ENCODE measurements at regions of chr12 and their contacts with region 1.

Region 1: DNA sequence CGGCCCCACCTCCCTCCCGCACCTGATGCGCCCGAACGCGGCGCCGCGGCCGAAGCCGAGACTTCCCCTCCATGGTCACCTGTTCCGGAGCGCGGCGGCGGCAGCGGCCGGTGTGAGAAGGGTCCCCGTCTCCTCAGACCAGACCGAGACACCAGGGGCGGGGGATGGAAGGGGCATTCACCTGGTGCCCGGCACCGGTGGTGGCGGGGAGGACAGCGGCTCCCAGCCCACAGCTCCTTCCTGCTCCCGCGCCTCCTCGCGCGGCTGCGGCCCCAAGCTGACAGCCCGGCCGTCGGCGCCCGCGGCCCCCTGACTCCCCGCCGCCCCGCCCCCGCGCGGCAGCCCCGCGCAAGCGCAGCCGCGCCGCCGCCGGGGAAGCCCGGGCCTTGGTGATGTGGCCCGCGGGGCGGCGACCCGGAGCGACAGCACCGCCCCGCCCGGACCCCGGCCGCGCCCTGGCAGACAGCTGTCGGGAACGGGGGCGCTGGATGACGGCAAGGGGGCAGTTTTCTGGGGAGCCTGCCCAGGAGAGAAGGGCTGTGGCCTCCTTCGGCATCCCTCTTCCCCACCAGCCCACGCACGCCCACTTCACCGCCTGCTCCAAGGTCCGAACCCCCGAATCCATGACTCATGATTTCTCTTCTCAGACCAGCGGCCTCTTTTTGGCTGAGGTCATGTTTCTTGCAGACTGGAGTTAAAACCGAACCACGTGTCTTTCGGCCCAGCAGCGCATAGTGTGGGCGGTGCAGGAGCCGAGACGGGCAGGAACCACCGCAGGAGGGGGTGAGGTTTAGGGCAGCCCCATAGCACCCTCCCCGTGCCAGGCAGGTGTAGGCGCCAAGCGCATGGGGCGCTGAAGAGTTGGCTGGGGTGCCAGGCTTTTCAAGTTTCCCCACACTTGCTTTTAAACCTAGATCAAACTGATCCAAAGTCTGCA is at the start of gene SLC41A2:
- DNase-seq: peak; percentile 55 to 87 (median 74)
- ATAC-seq: peak; percentile 93
- H3K4me3 ChIP-seq: peak within 1 kb of the TSS; percentile 77
- H3K4me3 Mint-ChIP-seq: peak within 1 kb of the TSS; percentile 91 to 98 (median 96)
- H3K27ac ChIP-seq: peak within 1 kb of the TSS; percentile 59
- H3K27ac Mint-ChIP-seq: peak within 1 kb of the TSS; percentile 65 to 93 (median 89)
- H3K4me1 ChIP-seq: peaks cover 6 to 9% of the 10 kb centered on the region in 2 donors
- H3K4me1 Mint-ChIP-seq: peaks cover 8 to 29% (median 26%) of the 10 kb centered on the region in 7 donors
- H3K27me3 ChIP-seq: peaks cover 0 to 3% of the 10 kb centered on the region in 2 donors
- H3K27me3 Mint-ChIP-seq: peaks cover 5 to 49% (median 7%) of the 10 kb centered on the region in 5 donors
- total RNA-seq, gene SLC41A2: 2.0 to 12.7 (median 2.6) TPM

Region 2: DNA sequence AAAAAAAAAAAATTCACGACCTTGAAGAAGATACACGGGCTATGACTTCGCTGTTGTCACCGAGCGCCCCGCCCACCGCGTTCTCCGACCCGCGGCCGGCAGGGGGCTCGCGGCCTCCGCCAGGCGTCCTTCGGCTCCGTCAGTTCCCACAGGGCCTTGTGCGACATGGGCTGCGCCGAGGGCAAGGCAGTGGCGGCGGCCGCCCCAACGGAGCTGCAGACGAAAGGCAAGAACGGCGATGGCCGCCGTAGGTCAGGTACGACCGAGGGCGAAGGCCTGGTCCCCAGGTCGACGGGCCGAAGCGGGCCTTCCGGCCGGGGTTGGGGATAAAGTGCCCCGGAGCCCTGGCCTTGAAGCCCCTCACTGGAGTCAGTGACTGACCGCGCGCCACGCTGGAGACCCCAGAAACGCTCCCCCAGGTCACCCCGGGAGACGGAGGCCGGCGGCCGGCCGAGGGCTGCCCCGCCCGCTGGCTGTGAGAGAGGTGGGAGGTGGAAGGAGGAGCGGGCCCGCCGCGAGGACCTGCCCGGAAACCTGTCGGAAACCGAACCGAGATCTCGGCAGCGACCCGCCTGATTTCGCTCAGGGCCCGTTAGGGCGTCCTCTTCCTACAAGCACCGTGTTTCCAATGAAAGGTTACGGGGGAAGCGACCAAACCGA is 742.5 kb before region 1 on chr12 and contains the start of gene TXNRD1:
- CTCF ChIA-PET with region 1: interaction called, 3 read pairs
- POLR2A ChIA-PET with region 1: no interaction called
- intact Hi-C with region 1: loop called (anchors 5 kb)
- DNase-seq: peak; percentile 70 to 84 (median 81)
- ATAC-seq: peak; percentile 97
- H3K4me3 ChIP-seq: peak within 1 kb of the TSS; percentile 69
- H3K4me3 Mint-ChIP-seq: peak within 1 kb of the TSS; percentile 79 to 89 (median 84)
- H3K27ac ChIP-seq: peak within 1 kb of the TSS; percentile 64
- H3K27ac Mint-ChIP-seq: peak within 1 kb of the TSS; percentile 64 to 86 (median 72)
- H3K4me1 ChIP-seq: peaks cover 0 to 5% of the 10 kb centered on the region in 2 donors
- H3K4me1 Mint-ChIP-seq: peaks cover 15 to 41% (median 26%) of the 10 kb centered on the region in 7 donors
- H3K27me3 ChIP-seq: no peaks in the 10 kb centered on the region
- H3K27me3 Mint-ChIP-seq: peaks cover 0 to 8% (median 0%) of the 10 kb centered on the region in 5 donors
- total RNA-seq, gene TXNRD1: 19.1 to 73.5 (median 41.7) TPM

Region 3: GRCh38 chr12:104671407-104672098 is 286.7 kb before region 1 on chr12:
- CTCF ChIA-PET with region 1: no interaction called
- POLR2A ChIA-PET with region 1: no interaction called
- intact Hi-C with region 1: loop called in 1 of 2 experiments (anchors 1 kb)
- DNase-seq: peak in 3 of 9 donors; percentile 30 to 80 (median 58)
- ATAC-seq: peak; percentile 80
- H3K4me3 ChIP-seq: no peak overlapping the region
- H3K4me3 Mint-ChIP-seq: peak overlapping the region in 7 of 10 donors; percentile 6 to 67 (median 21)
- H3K27ac ChIP-seq: no peak overlapping the region
- H3K27ac Mint-ChIP-seq: peak overlapping the region in 7 of 9 donors; percentile 11 to 92 (median 67)
- H3K4me1 ChIP-seq: peaks cover 25 to 36% of the 10 kb centered on the region in 2 donors
- H3K4me1 Mint-ChIP-seq: peaks cover 32 to 64% (median 48%) of the 10 kb centered on the region in 7 donors
- H3K27me3 ChIP-seq: no peaks in the 10 kb centered on the region
- H3K27me3 Mint-ChIP-seq: no peaks in the 10 kb centered on the region

Region 4: DNA sequence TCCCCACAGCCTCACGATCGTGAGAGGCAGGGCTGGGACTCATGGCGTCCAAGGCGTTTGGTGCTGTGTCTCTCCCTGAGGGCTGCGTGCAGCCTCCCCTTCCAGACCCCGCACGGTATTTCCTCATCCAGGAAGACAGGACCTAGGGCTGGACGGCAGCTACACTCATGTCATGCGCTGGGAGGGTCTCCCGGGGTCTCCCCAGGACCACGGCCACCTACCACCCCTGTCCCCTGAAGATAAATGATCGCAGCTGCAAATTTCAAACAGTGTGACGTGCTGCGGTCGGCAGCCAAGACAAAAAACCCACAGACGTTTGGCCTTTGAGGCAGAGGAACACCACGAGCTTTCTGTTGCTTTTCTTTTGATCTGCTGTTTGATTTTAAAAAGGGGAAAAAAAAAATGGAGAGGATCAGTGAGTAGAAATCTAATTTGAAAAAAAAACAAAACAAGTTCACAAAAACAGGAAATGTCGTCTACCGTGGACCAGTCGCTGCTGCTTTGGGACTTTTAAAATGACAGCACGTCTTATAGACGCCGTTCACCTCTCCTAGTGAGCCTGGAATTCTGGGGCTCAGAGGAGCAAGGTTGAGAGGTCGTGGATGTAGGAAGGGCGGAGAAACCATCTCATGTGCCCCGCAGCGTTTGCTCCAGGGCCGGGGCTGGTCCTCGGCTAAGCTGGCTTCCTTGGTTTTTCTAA is 237.8 kb before region 1 on chr12:
- CTCF ChIA-PET with region 1: no interaction called
- POLR2A ChIA-PET with region 1: no interaction called
- intact Hi-C with region 1: loop called in 1 of 2 experiments (anchors 2 kb)
- DNase-seq: peak; percentile 32 to 92 (median 88)
- ATAC-seq: peak; percentile 87
- H3K4me3 ChIP-seq: peak overlapping the region; percentile 72
- H3K4me3 Mint-ChIP-seq: peak overlapping the region; percentile 73 to 95 (median 81)
- H3K27ac ChIP-seq: peak overlapping the region; percentile 77
- H3K27ac Mint-ChIP-seq: peak overlapping the region; percentile 86 to 96 (median 92)
- H3K4me1 ChIP-seq: peaks cover 30 to 39% of the 10 kb centered on the region in 2 donors
- H3K4me1 Mint-ChIP-seq: peaks cover 41 to 82% (median 65%) of the 10 kb centered on the region in 7 donors
- H3K27me3 ChIP-seq: no peaks in the 10 kb centered on the region
- H3K27me3 Mint-ChIP-seq: peaks cover 0 to 3% (median 0%) of the 10 kb centered on the region in 5 donors

Region 5: DNA sequence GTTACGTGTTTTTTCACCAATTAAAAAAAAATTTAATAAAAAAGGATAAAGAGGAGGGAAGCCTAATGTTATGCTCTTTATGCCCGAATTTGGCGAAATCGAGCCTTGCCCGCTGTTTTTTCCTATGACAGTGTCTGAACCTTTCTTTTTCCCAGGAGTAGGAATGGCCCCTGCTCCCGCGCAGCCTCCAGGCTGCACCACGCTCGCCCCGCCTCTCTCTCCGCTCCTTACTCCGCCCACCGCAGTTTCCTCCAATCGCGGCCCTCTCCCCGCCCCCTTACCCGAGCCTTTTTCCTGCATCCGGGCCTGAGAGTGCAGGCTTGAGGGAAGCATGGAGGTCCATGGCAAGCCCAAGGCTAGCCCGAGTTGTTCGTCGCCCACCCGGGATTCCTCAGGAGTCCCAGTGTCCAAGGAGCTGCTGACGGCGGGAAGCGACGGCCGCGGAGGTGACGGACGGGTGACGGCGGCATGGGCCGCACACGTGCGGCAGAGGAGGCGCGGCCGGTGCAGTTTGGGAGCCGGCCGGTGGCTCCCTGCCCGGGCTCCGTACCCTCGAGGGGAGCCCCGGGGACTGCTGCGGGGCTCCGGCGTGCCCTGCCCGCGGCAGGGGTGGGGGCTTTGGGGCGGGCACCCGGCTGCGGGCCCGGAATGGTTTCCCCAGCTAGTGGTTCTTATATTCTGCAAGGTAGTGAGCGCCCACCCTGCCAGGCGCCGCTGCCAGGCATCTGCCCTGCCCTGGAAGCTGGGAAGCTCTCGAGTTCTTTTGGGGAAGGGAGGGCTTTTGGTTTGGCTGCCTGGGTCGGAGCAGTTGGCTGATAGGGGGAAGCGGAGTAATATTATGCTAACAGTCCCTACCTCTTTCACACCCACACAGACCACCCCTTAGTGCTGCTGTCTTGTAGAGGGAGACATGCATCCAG is 28.0 kb after region 1 on chr12 and contains the start of gene NOPCHAP1:
- CTCF ChIA-PET with region 1: no interaction called
- POLR2A ChIA-PET with region 1: no interaction called
- intact Hi-C with region 1: loop called (anchors 1 kb)
- DNase-seq: peak; percentile 64 to 84 (median 78)
- ATAC-seq: peak; percentile 100
- H3K4me3 ChIP-seq: peak within 1 kb of the TSS; percentile 91
- H3K4me3 Mint-ChIP-seq: peak within 1 kb of the TSS; percentile 90 to 95 (median 94)
- H3K27ac ChIP-seq: peak within 1 kb of the TSS; percentile 73
- H3K27ac Mint-ChIP-seq: peak within 1 kb of the TSS; percentile 63 to 87 (median 74)
- H3K4me1 ChIP-seq: peaks cover 12 to 13% of the 10 kb centered on the region in 2 donors
- H3K4me1 Mint-ChIP-seq: peaks cover 19 to 47% (median 37%) of the 10 kb centered on the region in 7 donors
- H3K27me3 ChIP-seq: no peaks in the 10 kb centered on the region
- H3K27me3 Mint-ChIP-seq: peaks cover 0 to 13% (median 5%) of the 10 kb centered on the region in 5 donors
- total RNA-seq, gene NOPCHAP1: 10.5 to 18.0 (median 15.2) TPM

Region 6: DNA sequence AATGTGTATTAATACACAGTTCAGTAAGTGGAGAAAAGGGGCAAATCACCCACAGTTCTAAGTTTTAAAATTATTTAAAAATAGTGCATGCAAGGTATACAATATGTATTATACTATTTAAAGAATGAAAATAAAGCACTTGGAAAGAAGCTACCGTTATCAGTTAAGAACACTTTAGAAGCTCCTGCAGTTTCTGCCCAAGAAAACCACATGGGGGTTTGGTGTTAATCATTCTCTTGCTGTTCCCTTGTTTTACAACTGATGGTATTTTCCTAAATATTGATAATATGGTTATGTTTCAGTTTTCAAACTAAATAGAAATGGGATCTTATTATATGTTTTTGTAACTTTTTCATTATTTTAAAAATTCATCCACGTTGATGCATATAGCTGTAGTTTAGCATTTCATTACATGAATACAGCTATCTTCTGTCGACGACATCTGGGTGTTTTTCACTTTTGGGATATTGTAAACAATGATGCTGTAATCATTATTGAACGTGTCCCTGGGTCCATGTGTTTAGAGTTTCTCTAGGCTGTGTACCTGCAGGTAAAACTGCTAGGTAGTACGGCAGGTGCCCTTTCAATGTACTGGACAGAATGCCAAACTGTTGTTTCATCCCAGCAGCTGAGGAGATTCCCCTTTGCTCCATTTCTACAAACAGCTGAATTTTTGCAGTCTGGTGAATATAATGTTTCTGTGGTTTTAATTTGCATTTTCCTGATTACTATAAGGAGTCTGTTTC is 213.6 kb after region 1 on chr12:
- CTCF ChIA-PET with region 1: no interaction called
- POLR2A ChIA-PET with region 1: no interaction called
- intact Hi-C with region 1: loop called in 1 of 2 experiments (anchors 2 kb)
- DNase-seq: no peak
- ATAC-seq: no peak
- H3K4me3 ChIP-seq: no peak overlapping the region
- H3K4me3 Mint-ChIP-seq: no peak overlapping the region
- H3K27ac ChIP-seq: no peak overlapping the region
- H3K27ac Mint-ChIP-seq: peak overlapping the region in 8 of 9 donors; percentile 6 to 70 (median 55)
- H3K4me1 ChIP-seq: no peaks in the 10 kb centered on the region
- H3K4me1 Mint-ChIP-seq: peaks cover 0 to 9% (median 3%) of the 10 kb centered on the region in 7 donors
- H3K27me3 ChIP-seq: no peaks in the 10 kb centered on the region
- H3K27me3 Mint-ChIP-seq: no peaks in the 10 kb centered on the region